PC-3 (cell line): ENCODE measurements at regions of chr1 and their contacts with region 1.

Region 1: GRCh38 chr1:215682232-215682631 is 115.1 kb downstream of the KCTD3 start:
- DNase-seq: peak; percentile 74
- ATAC-seq: peak; percentile 82
- H3K4me3 ChIP-seq: no peak overlapping the region
- H3K27ac ChIP-seq: no peak overlapping the region
- H3K4me1 ChIP-seq: no peaks in the 10 kb centered on the region
- H3K27me3 ChIP-seq: peaks cover 45% of the 10 kb centered on the region
- CTCF ChIP-seq: peak; percentile 79

Region 2: GRCh38 chr1:213925531-213926182 is 1756.6 kb before region 1 on chr1:
- CTCF ChIA-PET with region 1: no interaction called
- POLR2A ChIA-PET with region 1: no interaction called
- intact Hi-C with region 1: no loop called
- DNase-seq: no peak
- ATAC-seq: no peak
- H3K4me3 ChIP-seq: no peak overlapping the region
- H3K27ac ChIP-seq: no peak overlapping the region
- H3K4me1 ChIP-seq: no peaks in the 10 kb centered on the region
- H3K27me3 ChIP-seq: peaks cover 63% of the 10 kb centered on the region
- CTCF ChIP-seq: no peak

Region 3: DNA sequence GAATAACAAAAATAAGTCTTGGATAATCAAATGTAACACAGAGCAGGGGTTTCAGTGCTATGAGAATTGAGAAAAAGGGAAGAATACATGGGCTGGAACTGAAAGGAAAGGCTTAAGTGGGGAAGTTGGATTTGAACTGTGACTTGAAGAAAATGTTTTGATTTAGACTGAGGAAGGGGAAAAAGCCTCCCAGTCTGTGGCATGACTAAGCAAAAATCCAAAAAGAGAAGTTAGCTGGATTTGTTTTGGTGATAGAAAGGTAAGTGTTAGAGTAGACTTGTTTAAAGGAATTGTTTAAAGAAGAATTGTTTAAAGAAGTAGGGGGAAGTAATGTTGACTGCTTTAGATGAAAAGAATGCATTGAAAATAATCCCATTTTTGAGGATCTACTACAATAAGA is 553.7 kb before region 1 on chr1:
- CTCF ChIA-PET with region 1: no interaction called
- POLR2A ChIA-PET with region 1: no interaction called
- intact Hi-C with region 1: no loop called
- DNase-seq: no peak
- ATAC-seq: no peak
- H3K4me3 ChIP-seq: no peak overlapping the region
- H3K27ac ChIP-seq: no peak overlapping the region
- H3K4me1 ChIP-seq: no peaks in the 10 kb centered on the region
- H3K27me3 ChIP-seq: no peaks in the 10 kb centered on the region
- CTCF ChIP-seq: no peak

Region 4: GRCh38 chr1:215584389-215584788 is 97.8 kb before region 1 on chr1:
- CTCF ChIA-PET with region 1: no interaction called
- POLR2A ChIA-PET with region 1: no interaction called
- intact Hi-C with region 1: no loop called
- DNase-seq: no peak
- ATAC-seq: no peak
- H3K4me3 ChIP-seq: no peak overlapping the region
- H3K27ac ChIP-seq: no peak overlapping the region
- H3K4me1 ChIP-seq: peaks cover 24% of the 10 kb centered on the region
- H3K27me3 ChIP-seq: no peaks in the 10 kb centered on the region
- CTCF ChIP-seq: no peak

Region 5: DNA sequence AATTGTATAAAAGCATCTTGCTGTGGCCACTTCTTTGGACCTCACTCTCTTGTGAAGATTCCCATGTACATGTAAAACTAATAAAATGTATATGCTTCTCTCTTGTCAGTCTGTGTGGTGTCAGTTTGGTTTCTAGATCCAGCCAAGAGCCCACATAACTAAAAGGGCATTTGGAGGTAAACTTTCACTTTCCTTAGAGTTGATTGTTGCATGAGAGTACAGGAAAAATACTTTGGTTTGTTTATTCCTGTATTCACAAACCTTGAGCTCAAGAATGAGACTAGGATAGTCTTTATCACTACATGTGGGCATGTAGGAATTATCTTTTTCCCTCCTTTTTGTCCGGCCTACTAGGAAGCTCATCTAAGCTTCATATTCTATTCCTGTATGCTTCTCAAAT is 64.3 kb before region 1 on chr1:
- CTCF ChIA-PET with region 1: no interaction called
- POLR2A ChIA-PET with region 1: no interaction called
- intact Hi-C with region 1: no loop called
- DNase-seq: no peak
- ATAC-seq: no peak
- H3K4me3 ChIP-seq: no peak overlapping the region
- H3K27ac ChIP-seq: no peak overlapping the region
- H3K4me1 ChIP-seq: no peaks in the 10 kb centered on the region
- H3K27me3 ChIP-seq: no peaks in the 10 kb centered on the region
- CTCF ChIP-seq: no peak

Region 6: DNA sequence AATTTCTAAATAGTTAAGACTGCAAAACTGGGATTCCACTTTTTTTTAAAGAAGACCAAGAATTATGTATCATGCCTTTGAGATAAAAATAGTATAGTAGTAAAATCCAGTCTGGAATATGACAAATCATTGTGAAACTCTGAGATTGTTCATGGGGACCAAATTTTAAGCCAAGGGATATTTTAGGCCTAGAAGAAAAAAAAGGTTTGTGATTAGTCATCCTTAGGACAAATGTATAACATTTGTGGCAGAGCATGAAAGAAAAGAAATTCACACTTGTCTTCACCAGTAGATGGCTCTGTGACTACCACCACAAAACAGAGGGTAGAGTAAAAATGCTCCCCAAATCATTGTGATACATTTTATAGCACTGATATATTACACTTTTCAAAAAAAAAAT is 110.9 kb after region 1 on chr1:
- CTCF ChIA-PET with region 1: no interaction called
- POLR2A ChIA-PET with region 1: no interaction called
- intact Hi-C with region 1: loop called (anchors 1 kb)
- DNase-seq: peak; percentile 81
- ATAC-seq: peak; percentile 77
- H3K4me3 ChIP-seq: no peak overlapping the region
- H3K27ac ChIP-seq: no peak overlapping the region
- H3K4me1 ChIP-seq: peaks cover 20% of the 10 kb centered on the region
- H3K27me3 ChIP-seq: peaks cover 14% of the 10 kb centered on the region
- CTCF ChIP-seq: peak; percentile 90

Region 7: GRCh38 chr1:215992620-215993019 is 310.4 kb after region 1 on chr1:
- CTCF ChIA-PET with region 1: no interaction called
- POLR2A ChIA-PET with region 1: no interaction called
- intact Hi-C with region 1: loop called (anchors 2 kb)
- DNase-seq: peak; percentile 72
- ATAC-seq: peak; percentile 82
- H3K4me3 ChIP-seq: no peak overlapping the region
- H3K27ac ChIP-seq: no peak overlapping the region
- H3K4me1 ChIP-seq: no peaks in the 10 kb centered on the region
- H3K27me3 ChIP-seq: peaks cover 58% of the 10 kb centered on the region
- CTCF ChIP-seq: peak; percentile 83

Region 8: GRCh38 chr1:216119602-216120001 is 437.4 kb after region 1 on chr1:
- CTCF ChIA-PET with region 1: interaction called, 6 read pairs
- POLR2A ChIA-PET with region 1: no interaction called
- intact Hi-C with region 1: loop called (anchors 1 kb)
- DNase-seq: peak; percentile 75
- ATAC-seq: peak; percentile 93
- H3K4me3 ChIP-seq: no peak overlapping the region
- H3K27ac ChIP-seq: no peak overlapping the region
- H3K4me1 ChIP-seq: no peaks in the 10 kb centered on the region
- H3K27me3 ChIP-seq: peaks cover 47% of the 10 kb centered on the region
- CTCF ChIP-seq: peak; percentile 87